CD4-positive, alpha-beta memory T cell (primary cell): ENCODE measurements at regions of chr22 and their contacts with region 1.

Region 1: DNA sequence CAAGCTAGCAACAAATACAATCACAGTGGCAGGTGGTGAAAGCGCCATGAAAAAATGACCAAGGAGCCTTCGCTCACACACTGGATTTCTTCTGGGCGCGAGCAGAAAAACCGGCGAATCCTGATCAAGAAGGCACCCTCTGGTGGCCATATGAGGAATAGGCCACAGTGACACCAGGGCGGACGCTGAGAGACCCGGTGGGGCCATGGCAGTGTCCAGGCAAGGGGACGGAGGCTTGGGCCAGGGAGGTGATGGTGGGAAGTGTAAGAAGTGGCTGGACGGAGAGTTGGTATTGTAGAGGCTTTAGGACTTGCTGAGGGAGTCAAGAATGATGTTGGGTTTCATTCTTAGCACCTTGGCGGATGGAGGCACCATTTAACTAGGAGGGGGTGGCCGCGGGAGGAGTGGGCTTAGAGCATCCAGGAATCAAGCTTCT is 16.9 kb upstream of the RAC2 start:
- DNase-seq: peak; percentile 62 to 70 (median 65)
- H3K4me3 ChIP-seq: no peak overlapping the region
- H3K4me3 Mint-ChIP-seq: peak overlapping the region in 4 of 8 donors; percentile 2 to 40 (median 22)
- H3K27ac ChIP-seq: no peak overlapping the region
- H3K27ac Mint-ChIP-seq: peak overlapping the region; percentile 15 to 73 (median 52)
- H3K4me1 ChIP-seq: peaks cover 19% of the 10 kb centered on the region
- H3K4me1 Mint-ChIP-seq: peaks cover 11 to 18% (median 14%) of the 10 kb centered on the region in 4 donors
- H3K27me3 ChIP-seq: no peaks in the 10 kb centered on the region
- H3K27me3 Mint-ChIP-seq: peaks cover 0 to 1% of the 10 kb centered on the region in 2 donors

Region 2: GRCh38 chr22:37012262-37012904 is 248.5 kb before region 1 on chr22:
- CTCF ChIA-PET with region 1: no interaction called
- POLR2A ChIA-PET with region 1: no interaction called
- intact Hi-C with region 1: no loop called
- DNase-seq: no peak
- H3K4me3 ChIP-seq: no peak overlapping the region
- H3K4me3 Mint-ChIP-seq: no peak overlapping the region
- H3K27ac ChIP-seq: no peak overlapping the region
- H3K27ac Mint-ChIP-seq: no peak overlapping the region
- H3K4me1 ChIP-seq: no peaks in the 10 kb centered on the region
- H3K4me1 Mint-ChIP-seq: no peaks in the 10 kb centered on the region
- H3K27me3 ChIP-seq: no peaks in the 10 kb centered on the region
- H3K27me3 Mint-ChIP-seq: peaks cover 0 to under 1% of the 10 kb centered on the region in 2 donors

Region 3: GRCh38 chr22:37077884-37078485 is 182.9 kb before region 1 on chr22:
- CTCF ChIA-PET with region 1: interaction called, 8 read pairs
- POLR2A ChIA-PET with region 1: interaction called, 4 read pairs
- intact Hi-C with region 1: loop called (anchors 1 kb)
- DNase-seq: peak; percentile 76 to 85 (median 81)
- H3K4me3 ChIP-seq: no peak overlapping the region
- H3K4me3 Mint-ChIP-seq: peak overlapping the region in 7 of 8 donors; percentile 2 to 73 (median 58)
- H3K27ac ChIP-seq: peak overlapping the region; percentile 44
- H3K27ac Mint-ChIP-seq: peak overlapping the region; percentile 93 to 100 (median 99)
- H3K4me1 ChIP-seq: peaks cover 34% of the 10 kb centered on the region
- H3K4me1 Mint-ChIP-seq: peaks cover 26 to 52% (median 39%) of the 10 kb centered on the region in 4 donors
- H3K27me3 ChIP-seq: no peaks in the 10 kb centered on the region
- H3K27me3 Mint-ChIP-seq: peaks cover 4 to 5% of the 10 kb centered on the region in 2 donors

Region 4: DNA sequence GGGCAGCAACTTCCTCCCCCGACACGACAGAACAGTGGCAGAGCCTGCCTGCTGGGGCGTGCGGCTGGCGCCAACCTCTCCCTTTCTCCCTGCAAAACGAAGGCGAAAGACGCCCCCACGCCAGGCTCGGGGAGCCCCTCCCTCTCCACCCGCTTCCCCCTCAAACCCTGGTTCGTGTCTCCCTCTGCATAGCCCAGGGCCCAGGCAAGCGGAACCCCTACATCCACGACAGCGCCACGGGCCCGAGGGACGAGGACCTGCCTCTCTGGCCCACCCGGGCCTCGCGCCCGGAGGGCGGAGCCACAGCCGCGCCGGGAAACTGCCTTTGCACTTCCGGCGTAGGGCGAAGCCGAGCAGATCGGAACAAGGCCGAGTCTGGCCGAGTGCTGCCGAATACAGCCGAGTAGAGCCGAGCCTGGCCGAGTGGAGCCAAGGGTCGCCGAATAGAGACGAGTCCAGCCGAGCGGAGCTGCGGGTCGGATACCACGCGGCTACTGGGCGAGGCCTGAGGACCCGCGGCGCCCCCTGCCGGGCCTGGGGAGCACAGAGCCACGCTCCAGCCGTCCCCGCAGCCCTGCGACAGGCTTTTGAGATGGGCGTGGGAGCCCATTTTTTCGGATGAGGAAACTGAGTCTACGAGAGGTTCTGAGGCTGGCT is 61.7 kb before region 1 on chr22:
- CTCF ChIA-PET with region 1: interaction called, 86 read pairs
- POLR2A ChIA-PET with region 1: interaction called, 21 read pairs
- intact Hi-C with region 1: loop called (anchors 1 kb)
- DNase-seq: peak; percentile 97 to 100 (median 99)
- H3K4me3 ChIP-seq: peak overlapping the region; percentile 57 to 73
- H3K4me3 Mint-ChIP-seq: peak overlapping the region; percentile 79 to 91 (median 84)
- H3K27ac ChIP-seq: peak overlapping the region; percentile 93
- H3K27ac Mint-ChIP-seq: peak overlapping the region; percentile 89 to 96 (median 93)
- H3K4me1 ChIP-seq: peaks cover 39% of the 10 kb centered on the region
- H3K4me1 Mint-ChIP-seq: peaks cover 10 to 40% (median 22%) of the 10 kb centered on the region in 4 donors
- H3K27me3 ChIP-seq: no peaks in the 10 kb centered on the region
- H3K27me3 Mint-ChIP-seq: no peaks in the 10 kb centered on the region

Region 5: GRCh38 chr22:37229805-37230672 is 30.9 kb before region 1 on chr22:
- CTCF ChIA-PET with region 1: interaction called, 64 read pairs
- POLR2A ChIA-PET with region 1: interaction called, 24 read pairs
- intact Hi-C with region 1: loop called (anchors 2 kb)
- DNase-seq: peak; percentile 87 to 97 (median 88)
- H3K4me3 ChIP-seq: peak overlapping the region; percentile 48 to 51
- H3K4me3 Mint-ChIP-seq: peak overlapping the region; percentile 75 to 88 (median 82)
- H3K27ac ChIP-seq: peak overlapping the region; percentile 97
- H3K27ac Mint-ChIP-seq: peak overlapping the region; percentile 87 to 100 (median 100)
- H3K4me1 ChIP-seq: peaks cover 96% of the 10 kb centered on the region
- H3K4me1 Mint-ChIP-seq: peaks cover 67 to 92% (median 83%) of the 10 kb centered on the region in 4 donors
- H3K27me3 ChIP-seq: no peaks in the 10 kb centered on the region
- H3K27me3 Mint-ChIP-seq: no peaks in the 10 kb centered on the region

Region 6: GRCh38 chr22:37309211-37310074 is 48.5 kb after region 1 on chr22:
- CTCF ChIA-PET with region 1: interaction called, 42 read pairs
- POLR2A ChIA-PET with region 1: interaction called, 111 read pairs
- intact Hi-C with region 1: no loop called
- DNase-seq: peak; percentile 61 to 72 (median 67)
- H3K4me3 ChIP-seq: peak overlapping the region; percentile 49 to 54
- H3K4me3 Mint-ChIP-seq: peak overlapping the region; percentile 79 to 90 (median 82)
- H3K27ac ChIP-seq: peak overlapping the region; percentile 59
- H3K27ac Mint-ChIP-seq: peak overlapping the region; percentile 70 to 100 (median 92)
- H3K4me1 ChIP-seq: peaks cover 78% of the 10 kb centered on the region
- H3K4me1 Mint-ChIP-seq: peaks cover 56 to 94% (median 70%) of the 10 kb centered on the region in 4 donors
- H3K27me3 ChIP-seq: no peaks in the 10 kb centered on the region
- H3K27me3 Mint-ChIP-seq: no peaks in the 10 kb centered on the region

Region 7: DNA sequence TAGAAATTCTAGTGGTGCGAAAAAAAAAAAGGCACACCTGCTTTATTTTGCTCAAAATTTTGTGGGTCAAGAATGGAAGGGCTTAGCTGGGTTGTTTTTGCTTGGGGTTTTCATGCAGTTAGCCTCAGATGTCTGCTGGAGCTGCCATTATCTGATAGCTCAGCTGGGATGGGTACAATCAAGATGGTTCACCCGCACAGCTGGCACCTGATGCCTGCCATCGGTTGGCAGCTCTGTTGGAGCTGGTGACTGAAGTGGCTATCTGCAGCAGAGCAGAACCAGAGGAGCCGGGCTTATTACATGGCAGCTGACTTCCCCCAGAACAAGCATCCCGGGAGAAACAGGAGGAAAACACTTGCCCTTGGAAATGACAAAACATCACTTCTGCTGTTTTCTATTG is 178.4 kb after region 1 on chr22:
- CTCF ChIA-PET with region 1: interaction called, 13 read pairs
- POLR2A ChIA-PET with region 1: no interaction called
- intact Hi-C with region 1: no loop called
- DNase-seq: no peak
- H3K4me3 ChIP-seq: no peak overlapping the region
- H3K4me3 Mint-ChIP-seq: no peak overlapping the region
- H3K27ac ChIP-seq: no peak overlapping the region
- H3K27ac Mint-ChIP-seq: peak overlapping the region in 1 of 7 donors; percentile 36
- H3K4me1 ChIP-seq: no peaks in the 10 kb centered on the region
- H3K4me1 Mint-ChIP-seq: peaks cover 0 to 3% (median 0%) of the 10 kb centered on the region in 4 donors
- H3K27me3 ChIP-seq: no peaks in the 10 kb centered on the region
- H3K27me3 Mint-ChIP-seq: peaks cover 2 to 4% of the 10 kb centered on the region in 2 donors